Activated CD8-positive, alpha-beta memory T cell treated with anti-CD3 and anti-CD28 coated beads, Interleukin-2, amount 10 ng/mL, durations not matched to agents 7 days and 5 days (primary cell): ENCODE measurements at regions of chr16 and their contacts with region 1.

Region 1: DNA sequence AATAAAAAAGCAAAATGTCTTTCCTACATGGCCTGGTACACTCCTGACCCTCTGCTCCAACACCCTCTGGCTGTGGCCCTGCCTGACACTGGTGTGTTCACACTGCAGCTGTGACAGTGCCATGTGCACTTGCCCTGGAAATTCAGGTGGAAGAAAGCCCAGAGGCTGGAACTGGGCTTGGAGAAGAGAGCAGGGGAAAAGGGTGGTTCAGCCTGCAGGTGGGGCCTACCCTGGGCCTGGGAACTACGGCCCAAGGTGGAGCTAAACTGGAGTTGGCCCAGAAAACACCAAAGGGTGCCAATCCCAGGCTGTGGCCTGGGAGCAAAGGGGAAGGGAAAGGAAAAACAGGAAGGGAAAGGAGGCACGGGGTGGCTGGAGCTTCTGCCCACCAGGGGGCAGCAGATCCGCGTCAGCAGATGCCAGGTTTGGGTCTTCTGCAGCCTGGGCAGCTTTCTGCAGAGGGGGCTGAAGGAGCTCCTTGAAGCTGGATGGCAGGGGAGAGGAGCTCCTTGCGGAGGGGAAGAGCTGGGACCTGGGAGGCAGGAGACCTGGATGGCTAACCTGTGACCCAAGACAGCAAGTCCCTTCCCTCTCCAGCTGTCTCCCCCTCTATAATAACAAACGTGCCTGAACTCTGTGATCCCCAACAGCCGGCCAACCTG is 15.4 kb upstream of the CTCF start:
- DNase-seq: peak; percentile 81
- ATAC-seq: peak; percentile 57
- H3K4me3 Mint-ChIP-seq: no peak overlapping the region
- H3K27ac Mint-ChIP-seq: peak overlapping the region; percentile 97
- H3K4me1 Mint-ChIP-seq: peaks cover 40% of the 10 kb centered on the region
- H3K27me3 Mint-ChIP-seq: no peaks in the 10 kb centered on the region

Region 2: GRCh38 chr16:67504041-67505021 is 42.6 kb before region 1 on chr16:
- CTCF ChIA-PET with region 1: no interaction called
- DNase-seq: peak; percentile 89
- ATAC-seq: peak; percentile 98
- H3K4me3 Mint-ChIP-seq: no peak overlapping the region
- H3K27ac Mint-ChIP-seq: peak overlapping the region; percentile 83
- H3K4me1 Mint-ChIP-seq: peaks cover 42% of the 10 kb centered on the region
- H3K27me3 Mint-ChIP-seq: no peaks in the 10 kb centered on the region

Region 3: GRCh38 chr16:67514382-67514828 is 32.5 kb before region 1 on chr16:
- CTCF ChIA-PET with region 1: interaction called, 252 read pairs
- DNase-seq: peak; percentile 89
- ATAC-seq: peak; percentile 82
- H3K4me3 Mint-ChIP-seq: no peak overlapping the region
- H3K27ac Mint-ChIP-seq: peak overlapping the region; percentile 78
- H3K4me1 Mint-ChIP-seq: peaks cover 20% of the 10 kb centered on the region
- H3K27me3 Mint-ChIP-seq: no peaks in the 10 kb centered on the region

Region 4: GRCh38 chr16:67561824-67562525 is 15.1 kb after region 1 on chr16:
- CTCF ChIA-PET with region 1: interaction called, 360 read pairs
- DNase-seq: peak; percentile 100
- ATAC-seq: peak; percentile 88
- H3K4me3 Mint-ChIP-seq: peak overlapping the region; percentile 89
- H3K27ac Mint-ChIP-seq: peak overlapping the region; percentile 94
- H3K4me1 Mint-ChIP-seq: peaks cover 44% of the 10 kb centered on the region
- H3K27me3 Mint-ChIP-seq: no peaks in the 10 kb centered on the region

Region 5: GRCh38 chr16:67632415-67633172 is 85.7 kb after region 1 on chr16:
- CTCF ChIA-PET with region 1: interaction called, 10 read pairs
- DNase-seq: no peak
- ATAC-seq: no peak
- H3K4me3 Mint-ChIP-seq: no peak overlapping the region
- H3K27ac Mint-ChIP-seq: no peak overlapping the region
- H3K4me1 Mint-ChIP-seq: no peaks in the 10 kb centered on the region
- H3K27me3 Mint-ChIP-seq: no peaks in the 10 kb centered on the region

Region 6: DNA sequence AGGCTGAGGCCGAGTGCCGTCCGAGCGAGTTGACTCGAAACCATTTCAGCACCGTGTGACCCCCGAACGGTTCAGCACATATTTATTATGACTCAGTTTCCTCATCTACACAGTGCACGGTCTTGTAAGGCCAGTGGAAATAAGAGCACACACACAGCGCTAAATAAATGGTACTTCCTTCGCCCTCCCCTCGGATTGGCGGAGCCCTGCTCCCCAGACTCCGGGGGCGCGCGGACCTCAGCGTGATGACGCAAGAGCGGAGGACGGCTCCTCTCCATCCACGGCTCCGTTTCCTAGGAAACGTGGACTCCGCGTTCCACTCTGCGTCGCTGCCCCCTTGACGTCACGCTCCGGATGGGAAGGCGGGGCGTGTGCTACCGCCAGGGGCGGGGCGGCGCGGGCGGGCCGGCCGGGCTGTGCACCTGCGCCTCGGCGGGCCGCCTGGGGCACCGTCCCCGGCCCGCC is 113.7 kb after region 1 on chr16 and contains the start of gene PARD6A:
- CTCF ChIA-PET with region 1: interaction called, 46 read pairs
- DNase-seq: peak; percentile 99
- ATAC-seq: peak; percentile 82
- H3K4me3 Mint-ChIP-seq: peak within 1 kb of the TSS; percentile 94
- H3K27ac Mint-ChIP-seq: peak within 1 kb of the TSS; percentile 97
- H3K4me1 Mint-ChIP-seq: peaks cover 20% of the 10 kb centered on the region
- H3K27me3 Mint-ChIP-seq: no peaks in the 10 kb centered on the region
- total RNA-seq, gene PARD6A: 15.2 to 15.5 TPM